ENCODE measurements at regions of chr1 and their contacts with region 1.

Region 1: GRCh38 chr1:12619792-12620487 is 1.9 kb upstream of the DHRS3 start:
- DNase-seq: peak; percentile 74
- ATAC-seq: peak; percentile 51
- H3K4me3 ChIP-seq: peak overlapping the region; percentile 71 to 75
- H3K27ac ChIP-seq: peak overlapping the region; percentile 97
- H3K4me1 ChIP-seq: peaks cover 27 to 49% of the 10 kb centered on the region in 2 experiments
- H3K27me3 ChIP-seq: no peaks in the 10 kb centered on the region
- CTCF ChIP-seq: peak in 2 of 3 experiments; percentile 94 to 95; a peak in 4 of 6 replicates
- POLR2A ChIP-seq: no peak
- RAD21 ChIP-seq: no peak

Region 2: GRCh38 chr1:12314333-12314903 is 305.5 kb before region 1 on chr1:
- CTCF ChIA-PET with region 1: interaction called, 42 read pairs
- POLR2A ChIA-PET with region 1: no interaction called
- RAD21 ChIA-PET with region 1: no interaction called
- intact Hi-C with region 1: loop called (anchors 1 kb)
- DNase-seq: no peak
- ATAC-seq: peak; percentile 80
- H3K4me3 ChIP-seq: no peak overlapping the region
- H3K27ac ChIP-seq: no peak overlapping the region
- H3K4me1 ChIP-seq: no peaks in the 10 kb centered on the region
- H3K27me3 ChIP-seq: no peaks in the 10 kb centered on the region
- CTCF ChIP-seq: peak; percentile 25 to 81 (median 71); a peak in 3 of 6 replicates
- POLR2A ChIP-seq: no peak
- RAD21 ChIP-seq: peak; percentile 84

Region 3: DNA sequence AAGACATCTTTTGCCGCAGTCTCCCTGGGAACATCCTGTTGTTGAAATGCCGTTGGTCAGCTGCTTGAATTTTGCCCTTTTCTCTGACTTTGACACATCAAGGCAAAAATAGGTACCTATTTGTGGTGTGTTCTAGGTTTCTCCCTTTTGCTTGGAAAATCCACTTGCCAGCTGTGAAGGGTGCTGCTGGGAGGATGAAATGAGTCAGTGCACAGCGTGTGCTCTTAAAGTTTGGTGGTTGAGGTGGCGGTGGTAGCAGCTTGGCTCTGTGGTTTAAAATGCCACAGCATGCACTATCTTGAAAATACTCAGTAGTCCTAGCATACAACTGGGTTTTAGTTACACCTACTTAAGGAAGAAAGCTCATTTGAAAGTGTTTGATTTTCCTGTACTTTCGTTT is 185.8 kb before region 1 on chr1:
- CTCF ChIA-PET with region 1: no interaction called
- POLR2A ChIA-PET with region 1: no interaction called
- RAD21 ChIA-PET with region 1: no interaction called
- intact Hi-C with region 1: loop called (anchors 1 kb)
- DNase-seq: peak; percentile 51
- ATAC-seq: peak; percentile 73
- H3K4me3 ChIP-seq: peak overlapping the region in 1 of 2 experiments; percentile 31; a peak in 2 of 4 replicates
- H3K27ac ChIP-seq: peak overlapping the region; percentile 66; the same call in 1 of the 2 replicates
- H3K4me1 ChIP-seq: peaks cover 40 to 58% of the 10 kb centered on the region in 2 experiments
- H3K27me3 ChIP-seq: no peaks in the 10 kb centered on the region
- CTCF ChIP-seq: no peak
- POLR2A ChIP-seq: no peak
- RAD21 ChIP-seq: no peak; the same call in 1 of the 2 replicates

Region 4: GRCh38 chr1:12539705-12540579 is 80.0 kb before region 1 on chr1:
- CTCF ChIA-PET with region 1: interaction called, 4 read pairs
- POLR2A ChIA-PET with region 1: interaction called, 9 read pairs
- RAD21 ChIA-PET with region 1: interaction called, 4 to 5 read pairs
- intact Hi-C with region 1: loop called (anchors 2 kb)
- DNase-seq: peak; percentile 83
- ATAC-seq: peak; percentile 75
- H3K4me3 ChIP-seq: peak overlapping the region; percentile 25 to 48
- H3K27ac ChIP-seq: peak overlapping the region; percentile 24; the same call in 1 of the 2 replicates
- H3K4me1 ChIP-seq: peaks cover 27 to 51% of the 10 kb centered on the region in 2 experiments
- H3K27me3 ChIP-seq: no peaks in the 10 kb centered on the region
- CTCF ChIP-seq: no peak
- POLR2A ChIP-seq: no peak
- RAD21 ChIP-seq: peak; percentile 57

Region 5: GRCh38 chr1:12604114-12604874 is 15.6 kb before region 1 on chr1:
- CTCF ChIA-PET with region 1: interaction called, 17 read pairs
- POLR2A ChIA-PET with region 1: interaction called, 12 read pairs
- RAD21 ChIA-PET with region 1: interaction called, 3 to 12 read pairs
- intact Hi-C with region 1: loop called (anchors 1 kb)
- DNase-seq: peak; percentile 76
- ATAC-seq: peak; percentile 81
- H3K4me3 ChIP-seq: 0 out of 4 replicates have a peak overlapping the region, but pooled peaks of 1 of the 2 experiments have one; percentile 10
- H3K27ac ChIP-seq: peak overlapping the region; percentile 42
- H3K4me1 ChIP-seq: peaks cover 52 to 81% of the 10 kb centered on the region in 2 experiments
- H3K27me3 ChIP-seq: no peaks in the 10 kb centered on the region
- CTCF ChIP-seq: no peak
- POLR2A ChIP-seq: no peak
- RAD21 ChIP-seq: no peak